ENCODE measurements at regions of chr13 and their contacts with region 1.

Region 1: DNA sequence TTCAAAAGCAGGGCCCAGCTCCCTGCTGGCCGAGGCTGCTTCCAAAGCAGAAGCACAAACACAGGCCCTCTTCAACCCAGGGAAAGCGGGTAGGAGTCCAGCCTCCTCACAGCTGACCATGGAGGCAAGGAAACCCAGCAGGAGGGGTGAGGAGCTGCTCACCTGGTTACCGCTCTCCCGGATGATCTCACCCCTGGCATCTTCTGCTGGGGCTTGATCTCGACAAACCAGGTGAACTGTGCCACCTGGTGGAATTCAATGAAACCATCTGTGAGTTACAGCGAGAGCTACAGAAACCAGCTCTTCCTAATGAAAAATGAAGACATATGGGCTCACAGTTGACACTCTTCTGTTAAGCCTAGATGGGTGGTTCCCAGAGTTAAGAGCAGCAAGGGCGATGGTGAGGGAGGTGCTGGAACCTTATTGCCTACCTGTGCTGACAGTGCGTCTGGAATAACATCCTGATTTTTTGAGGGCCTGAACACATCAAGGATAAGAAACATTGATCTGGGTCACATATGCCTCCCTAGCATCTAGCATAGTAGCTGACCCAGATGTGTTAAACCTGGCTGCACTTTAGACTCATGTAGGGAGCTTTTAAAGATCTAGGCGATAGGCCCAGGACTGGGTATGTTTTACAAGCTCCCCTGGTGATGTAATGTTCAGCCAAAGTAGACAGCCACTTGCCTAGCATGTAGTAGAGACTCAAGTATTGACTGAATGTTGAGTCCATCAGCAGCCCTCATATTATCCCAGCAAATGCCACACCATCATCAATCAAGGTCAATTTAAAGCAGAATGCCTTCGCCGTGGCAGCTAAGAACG is 6.1 kb downstream of the DHRS12 start:
- DNase-seq: peak; percentile 77
- H3K4me3 Mint-ChIP-seq: no peak overlapping the region
- H3K27ac Mint-ChIP-seq: no peak overlapping the region
- H3K4me1 Mint-ChIP-seq: peaks cover 37% of the 10 kb centered on the region
- H3K27me3 Mint-ChIP-seq: no peaks in the 10 kb centered on the region

Region 2: DNA sequence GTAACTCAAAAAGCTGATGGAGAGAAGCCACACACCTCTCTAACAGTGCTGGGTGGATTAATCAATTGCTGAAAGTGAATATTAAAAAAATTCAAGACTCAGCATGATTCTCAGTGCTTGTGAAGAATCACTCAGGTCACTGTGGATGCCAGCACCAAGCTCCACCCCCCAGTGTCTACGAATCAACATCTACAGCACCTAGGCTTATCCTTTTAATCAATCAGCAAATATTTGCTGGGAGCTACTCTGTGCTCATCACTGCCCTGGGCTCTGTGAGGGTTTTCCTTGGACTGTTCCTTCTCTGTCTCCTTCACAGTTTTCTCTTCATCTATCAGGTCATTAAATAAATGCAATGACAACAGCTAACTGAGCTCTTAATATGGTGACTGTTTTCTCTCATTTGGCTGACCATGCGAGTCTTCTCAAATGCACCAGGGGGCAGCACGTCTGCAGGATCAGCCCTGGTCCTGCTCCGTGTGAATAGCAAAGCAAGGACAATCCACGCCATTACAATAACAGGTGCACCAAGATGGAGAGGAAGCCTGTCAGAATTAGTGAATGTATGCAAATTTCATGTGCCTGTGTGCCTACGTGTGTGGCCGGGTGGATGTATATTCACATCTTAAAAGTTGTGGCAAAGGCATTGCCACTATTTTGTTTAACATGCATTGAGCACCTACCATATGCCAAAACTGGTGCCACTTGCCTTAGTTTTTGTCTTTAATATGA is 672.2 kb before region 1 on chr13:
- CTCF ChIA-PET with region 1: interaction called, 61 read pairs
- DNase-seq: peak; percentile 62
- H3K4me3 Mint-ChIP-seq: no peak overlapping the region
- H3K27ac Mint-ChIP-seq: no peak overlapping the region
- H3K4me1 Mint-ChIP-seq: peaks cover 7% of the 10 kb centered on the region
- H3K27me3 Mint-ChIP-seq: peaks cover 4% of the 10 kb centered on the region

Region 3: GRCh38 chr13:51297556-51297955 is 500.3 kb before region 1 on chr13:
- CTCF ChIA-PET with region 1: interaction called, 16 read pairs
- DNase-seq: no peak
- H3K4me3 Mint-ChIP-seq: no peak overlapping the region
- H3K27ac Mint-ChIP-seq: no peak overlapping the region
- H3K4me1 Mint-ChIP-seq: no peaks in the 10 kb centered on the region
- H3K27me3 Mint-ChIP-seq: peaks cover 4% of the 10 kb centered on the region

Region 4: DNA sequence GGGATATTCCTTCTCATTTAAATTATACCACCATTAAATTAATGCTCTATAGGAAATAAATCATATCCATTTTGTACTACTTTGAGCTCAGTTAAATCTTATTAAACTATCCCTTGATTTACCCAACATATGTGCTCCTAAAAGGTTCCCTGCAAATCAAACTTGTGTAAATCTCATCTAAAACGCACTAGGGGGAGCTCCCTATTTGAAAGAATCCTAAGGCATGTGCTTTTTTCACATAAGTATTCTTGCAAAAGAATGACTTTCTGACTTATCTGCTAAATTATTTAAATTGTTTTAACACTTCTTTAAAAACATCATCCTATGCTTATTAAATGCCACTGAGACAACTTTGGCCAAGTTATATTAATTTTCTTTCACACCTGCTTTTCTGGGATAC is 353.0 kb before region 1 on chr13:
- CTCF ChIA-PET with region 1: interaction called, 45 read pairs
- DNase-seq: no peak
- H3K4me3 Mint-ChIP-seq: no peak overlapping the region
- H3K27ac Mint-ChIP-seq: no peak overlapping the region
- H3K4me1 Mint-ChIP-seq: peaks cover 9% of the 10 kb centered on the region
- H3K27me3 Mint-ChIP-seq: no peaks in the 10 kb centered on the region

Region 5: GRCh38 chr13:51584731-51585672 is 212.9 kb before region 1 on chr13:
- CTCF ChIA-PET with region 1: interaction called, 10 read pairs
- DNase-seq: peak; percentile 85
- H3K4me3 Mint-ChIP-seq: peak overlapping the region; percentile 87
- H3K27ac Mint-ChIP-seq: peak overlapping the region; percentile 96
- H3K4me1 Mint-ChIP-seq: peaks cover 47% of the 10 kb centered on the region
- H3K27me3 Mint-ChIP-seq: peaks cover 8% of the 10 kb centered on the region

Region 6: DNA sequence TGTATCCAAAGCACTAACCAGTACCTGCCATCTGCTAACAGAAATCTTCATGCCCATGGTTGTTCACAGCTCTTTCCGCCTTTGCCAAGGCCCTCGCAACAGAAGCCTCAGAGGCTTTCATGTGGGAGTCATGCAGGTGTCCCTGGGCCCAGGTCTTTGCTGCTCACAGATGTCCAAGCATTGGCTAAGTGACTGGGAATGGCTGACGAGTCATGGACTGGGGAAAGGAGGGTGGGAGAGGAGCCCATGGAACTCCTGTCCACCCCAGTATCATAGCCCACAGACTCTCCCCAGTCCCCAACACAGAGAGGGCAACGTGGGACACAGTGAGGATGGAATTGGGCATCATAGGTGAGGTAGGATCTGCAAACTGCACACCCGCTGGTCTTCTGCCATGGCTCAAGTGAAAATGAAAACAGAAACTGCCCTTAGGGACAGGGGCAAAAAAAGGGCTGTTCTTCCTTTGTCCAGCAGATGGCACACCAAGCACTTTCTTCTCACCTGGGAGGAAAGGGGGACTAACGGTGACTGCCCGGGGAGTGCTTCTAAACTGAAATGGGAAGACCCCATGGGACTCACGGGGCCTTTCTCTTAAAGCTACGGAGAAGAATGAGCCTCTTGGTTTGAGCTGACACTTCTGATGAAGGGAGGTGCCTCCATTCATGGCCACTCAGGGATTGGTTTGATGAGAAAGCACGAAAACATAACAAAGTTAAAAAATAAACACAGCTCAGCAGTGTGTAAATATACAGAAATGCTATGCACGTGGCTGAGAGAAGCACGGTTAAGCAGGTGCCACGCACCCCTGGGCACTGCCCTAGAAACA is 17.2 kb after region 1 on chr13:
- CTCF ChIA-PET with region 1: interaction called, 10 read pairs
- DNase-seq: peak; percentile 88
- H3K4me3 Mint-ChIP-seq: peak overlapping the region; percentile 11
- H3K27ac Mint-ChIP-seq: peak overlapping the region; percentile 71
- H3K4me1 Mint-ChIP-seq: peaks cover 64% of the 10 kb centered on the region
- H3K27me3 Mint-ChIP-seq: no peaks in the 10 kb centered on the region